Endothelial cell of umbilical vein (primary cell): ENCODE measurements at regions of chr15 and their contacts with region 1.

Region 1: DNA sequence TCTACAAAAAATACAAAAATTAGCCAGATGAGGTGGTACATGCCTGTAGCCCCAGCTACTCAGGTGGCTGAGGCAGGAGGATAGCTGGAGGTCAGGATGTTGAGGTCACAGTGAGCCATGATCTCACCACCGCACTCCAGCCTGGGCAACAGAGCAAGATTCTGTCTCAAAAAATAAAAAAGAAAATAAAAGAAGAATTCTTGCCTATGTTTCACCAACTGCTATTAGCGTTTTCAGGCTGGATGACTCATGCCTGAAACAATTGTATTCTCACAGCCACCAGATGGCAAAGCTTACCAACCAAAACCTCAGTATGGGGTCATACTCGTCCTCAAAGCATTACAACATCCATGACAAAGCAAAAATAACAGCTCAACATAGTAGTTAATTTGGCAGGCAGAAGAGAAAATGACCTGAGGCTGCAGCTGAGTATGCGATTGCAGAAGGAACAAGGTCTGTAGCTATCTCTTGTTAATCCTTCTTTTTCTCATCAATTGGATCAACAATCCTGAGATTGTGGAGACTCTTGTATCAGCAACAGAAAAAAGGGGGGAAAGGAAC is 52.2 kb downstream of the TP53BP1 start:
- DNase-seq: peak; percentile 94
- H3K4me3 ChIP-seq: no peak overlapping the region
- H3K27ac ChIP-seq: peak overlapping the region; percentile 61
- H3K4me1 ChIP-seq: peaks cover 8% of the 10 kb centered on the region
- H3K27me3 ChIP-seq: no peaks in the 10 kb centered on the region
- CTCF ChIP-seq: peak; percentile 29 to 42
- POLR2A ChIP-seq: no peak

Region 2: DNA sequence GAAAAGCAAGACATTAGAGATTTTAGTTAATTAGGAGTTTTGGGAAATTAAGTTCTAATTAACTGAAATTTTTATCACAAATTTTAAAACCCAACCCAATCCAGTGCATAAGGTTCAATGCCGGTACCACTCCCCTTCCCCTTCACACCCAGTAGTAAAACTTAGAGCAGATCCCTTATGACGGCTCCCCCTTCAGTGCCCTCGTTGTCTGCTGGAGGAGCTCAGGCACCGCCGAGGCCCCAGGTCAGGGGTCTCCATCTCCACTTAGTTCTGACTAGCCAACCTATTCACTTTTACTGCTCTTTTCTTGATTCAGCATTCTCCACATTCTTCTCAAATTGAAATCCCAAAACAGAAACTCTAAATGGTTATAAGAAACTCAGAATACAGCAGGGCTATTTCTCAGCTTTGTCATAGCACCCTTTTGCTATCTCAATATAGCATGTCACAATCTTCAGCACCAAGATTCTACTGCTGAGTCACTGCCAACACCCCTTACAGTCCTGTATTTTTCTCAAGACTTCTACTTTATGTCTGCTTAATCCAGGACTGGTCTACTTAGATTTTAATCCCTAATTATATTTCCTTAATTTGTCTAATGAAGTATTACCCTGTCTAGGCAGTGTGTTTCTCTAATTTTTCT is 30.1 kb before region 1 on chr15:
- CTCF ChIA-PET with region 1: interaction called, 10 read pairs
- POLR2A ChIA-PET with region 1: no interaction called
- dilution Hi-C with region 1: no loop called
- intact Hi-C with region 1: no loop called
- DNase-seq: no peak
- H3K4me3 ChIP-seq: no peak overlapping the region
- H3K27ac ChIP-seq: no peak overlapping the region
- H3K4me1 ChIP-seq: no peaks in the 10 kb centered on the region
- H3K27me3 ChIP-seq: no peaks in the 10 kb centered on the region
- CTCF ChIP-seq: no peak
- POLR2A ChIP-seq: no peak

Region 3: DNA sequence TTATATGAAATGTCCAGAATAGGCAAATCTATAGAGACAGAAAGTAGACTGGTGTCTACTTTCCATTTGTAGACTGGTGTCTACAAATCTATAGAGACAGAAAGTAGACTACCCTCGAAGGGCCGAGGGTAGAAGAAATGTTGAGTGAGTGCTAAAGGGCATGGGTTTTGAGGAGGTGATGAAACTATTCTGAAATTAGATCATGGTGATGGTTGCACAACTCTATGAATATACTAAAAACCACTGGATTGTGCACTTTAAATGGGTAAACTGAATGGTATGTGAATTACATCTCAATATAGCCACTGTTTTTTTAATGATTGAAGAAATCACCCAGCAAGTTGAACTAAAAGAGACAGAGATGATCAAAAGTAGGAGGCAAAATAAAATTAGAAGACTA is 24.3 kb after region 1 on chr15:
- CTCF ChIA-PET with region 1: interaction called, 10 read pairs
- POLR2A ChIA-PET with region 1: no interaction called
- dilution Hi-C with region 1: no loop called
- intact Hi-C with region 1: no loop called
- DNase-seq: no peak
- H3K4me3 ChIP-seq: no peak overlapping the region
- H3K27ac ChIP-seq: no peak overlapping the region
- H3K4me1 ChIP-seq: no peaks in the 10 kb centered on the region
- H3K27me3 ChIP-seq: no peaks in the 10 kb centered on the region
- CTCF ChIP-seq: no peak
- POLR2A ChIP-seq: no peak

Region 4: DNA sequence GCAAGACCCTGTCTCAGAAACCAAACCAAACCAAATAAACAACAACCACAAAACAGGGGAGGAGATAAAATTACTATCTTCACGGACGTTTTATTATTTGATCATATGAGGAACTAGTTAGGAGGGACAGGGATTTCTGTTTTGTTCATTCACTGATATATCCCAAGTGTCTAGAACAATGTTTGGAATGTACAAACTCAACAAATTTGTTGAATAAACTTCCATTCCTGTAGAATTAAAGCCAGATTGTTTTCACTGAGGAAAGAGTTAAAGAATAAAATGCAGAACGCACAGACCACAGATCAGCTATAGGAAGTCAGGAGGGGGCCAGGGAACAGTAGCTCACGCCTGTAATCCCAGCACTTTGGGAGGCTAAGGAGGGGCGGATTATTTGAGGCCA is 184.3 kb after region 1 on chr15:
- CTCF ChIA-PET with region 1: no interaction called
- POLR2A ChIA-PET with region 1: no interaction called
- dilution Hi-C with region 1: no loop called
- intact Hi-C with region 1: no loop called
- DNase-seq: no peak
- H3K4me3 ChIP-seq: no peak overlapping the region
- H3K27ac ChIP-seq: no peak overlapping the region
- H3K4me1 ChIP-seq: no peaks in the 10 kb centered on the region
- H3K27me3 ChIP-seq: no peaks in the 10 kb centered on the region
- CTCF ChIP-seq: no peak
- POLR2A ChIP-seq: no peak

Region 5: DNA sequence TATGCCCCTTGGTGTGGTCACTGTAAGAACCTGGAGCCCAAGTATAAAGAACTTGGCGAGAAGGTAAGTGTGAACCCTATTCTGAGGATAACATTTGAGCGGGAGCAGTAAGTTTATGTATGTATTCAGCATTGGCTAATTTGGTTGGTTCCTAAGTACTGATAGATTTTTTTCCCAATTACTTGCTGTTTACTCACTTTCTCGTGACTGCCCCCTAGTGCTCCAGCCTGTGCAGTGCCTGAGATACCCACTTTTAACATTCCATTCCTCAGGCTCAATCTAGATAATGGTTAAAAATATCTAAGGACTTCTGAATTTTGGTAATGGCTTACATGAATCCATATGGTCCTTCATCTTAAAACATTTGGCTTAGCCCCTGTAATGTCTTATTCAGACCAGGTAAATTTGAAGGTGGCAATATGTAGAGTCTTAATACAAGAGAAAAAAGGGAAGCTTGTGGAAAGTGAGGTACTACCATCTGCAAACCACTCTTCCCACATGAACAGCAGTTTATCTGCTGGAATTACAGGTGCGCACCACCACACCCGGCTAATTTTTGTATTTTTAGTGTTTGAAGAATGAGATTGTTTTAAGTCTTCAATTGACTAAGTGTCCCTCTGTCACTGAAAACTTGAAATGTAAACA is 328.9 kb after region 1 on chr15:
- CTCF ChIA-PET with region 1: no interaction called
- POLR2A ChIA-PET with region 1: no interaction called
- dilution Hi-C with region 1: no loop called
- intact Hi-C with region 1: loop called (anchors 5 kb)
- DNase-seq: peak; percentile 77
- H3K4me3 ChIP-seq: no peak overlapping the region
- H3K27ac ChIP-seq: no peak overlapping the region
- H3K4me1 ChIP-seq: no peaks in the 10 kb centered on the region
- H3K27me3 ChIP-seq: no peaks in the 10 kb centered on the region
- CTCF ChIP-seq: peak; percentile 68 to 79
- POLR2A ChIP-seq: no peak